PC-3 (cell line): ENCODE measurements at regions of chr2 and their contacts with region 1.

Region 1: GRCh38 chr2:234725528-234726264 is 226.1 kb upstream of the SH3BP4 start:
- DNase-seq: peak; percentile 10
- ATAC-seq: peak; percentile 40; the same call in 1 of the 2 replicates
- H3K4me3 ChIP-seq: no peak overlapping the region
- H3K27ac ChIP-seq: no peak overlapping the region
- H3K4me1 ChIP-seq: peaks cover 11% of the 10 kb centered on the region; the same call in 1 of the 2 replicates
- H3K27me3 ChIP-seq: no peaks in the 10 kb centered on the region
- CTCF ChIP-seq: no peak

Region 2: GRCh38 chr2:234674781-234675201 is 50.9 kb before region 1 on chr2:
- CTCF ChIA-PET with region 1: interaction called, 13 read pairs
- POLR2A ChIA-PET with region 1: no interaction called
- intact Hi-C with region 1: no loop called
- DNase-seq: no peak
- ATAC-seq: no peak
- H3K4me3 ChIP-seq: no peak overlapping the region
- H3K27ac ChIP-seq: no peak overlapping the region
- H3K4me1 ChIP-seq: peaks cover 56% of the 10 kb centered on the region
- H3K27me3 ChIP-seq: no peaks in the 10 kb centered on the region
- CTCF ChIP-seq: no peak

Region 3: GRCh38 chr2:234690569-234691213 is 35.0 kb before region 1 on chr2:
- CTCF ChIA-PET with region 1: no interaction called
- POLR2A ChIA-PET with region 1: no interaction called
- intact Hi-C with region 1: no loop called
- DNase-seq: peak; percentile 67
- ATAC-seq: peak; percentile 88
- H3K4me3 ChIP-seq: peak overlapping the region; percentile 21; the same call in 1 of the 2 replicates
- H3K27ac ChIP-seq: peak overlapping the region; percentile 58
- H3K4me1 ChIP-seq: peaks cover 34% of the 10 kb centered on the region
- H3K27me3 ChIP-seq: no peaks in the 10 kb centered on the region
- CTCF ChIP-seq: no peak

Region 4: DNA sequence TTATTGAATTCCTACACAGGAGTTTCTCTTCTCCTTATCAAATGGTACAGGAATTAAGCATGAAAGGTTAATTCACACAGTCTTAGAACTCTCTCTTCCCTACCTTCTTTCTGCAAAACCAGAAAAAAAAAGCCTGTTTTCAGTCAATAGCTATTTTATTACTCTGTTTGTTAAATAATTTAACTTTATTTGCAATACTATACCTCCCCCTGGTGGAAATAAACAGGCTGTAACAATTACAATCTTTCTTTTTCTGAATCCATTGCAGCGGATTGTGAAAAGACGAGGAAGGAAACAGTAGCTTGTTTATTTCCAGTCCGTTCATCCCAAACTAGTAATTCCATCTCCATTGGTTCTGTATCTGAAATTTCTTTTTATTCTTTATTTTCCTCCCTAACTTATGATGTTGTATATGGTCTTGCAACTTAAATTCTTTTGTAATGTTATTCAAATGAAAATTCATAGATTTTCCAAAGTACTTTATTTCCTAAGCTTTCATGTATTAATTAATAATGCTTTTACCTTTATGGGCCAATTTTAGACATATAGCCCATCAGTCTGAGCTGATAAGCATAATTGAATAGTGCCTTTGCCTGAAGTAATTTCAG is 391.3 kb after region 1 on chr2:
- CTCF ChIA-PET with region 1: interaction called, 10 read pairs
- POLR2A ChIA-PET with region 1: no interaction called
- intact Hi-C with region 1: no loop called
- DNase-seq: peak; percentile 76
- ATAC-seq: no peak; the same call in 1 of the 2 replicates
- H3K4me3 ChIP-seq: no peak overlapping the region
- H3K27ac ChIP-seq: no peak overlapping the region
- H3K4me1 ChIP-seq: no peaks in the 10 kb centered on the region
- H3K27me3 ChIP-seq: no peaks in the 10 kb centered on the region
- CTCF ChIP-seq: peak; percentile 80